Activated T-helper 2 cell treated with anti-CD3 and anti-CD28 coated beads, Interferon-gamma antibody, Interleukin-2, Interleukin-4, amounts not matched to agents 10 μg/mL and 5 μg/mL and 100 μg/mL, durations not matched to agents 14 hours and 24 hours and 36 hours (primary cell): ENCODE measurements at regions of chr15 and their contacts with region 1.

Region 1: GRCh38 chr15:41930221-41930866 is 36.5 kb upstream of the SPTBN5 start:
- DNase-seq: no peak
- H3K4me3 Mint-ChIP-seq: no peak overlapping the region
- H3K27ac Mint-ChIP-seq: no peak overlapping the region
- H3K4me1 Mint-ChIP-seq: peaks cover 36% of the 10 kb centered on the region
- H3K27me3 Mint-ChIP-seq: no peaks in the 10 kb centered on the region

Region 2: DNA sequence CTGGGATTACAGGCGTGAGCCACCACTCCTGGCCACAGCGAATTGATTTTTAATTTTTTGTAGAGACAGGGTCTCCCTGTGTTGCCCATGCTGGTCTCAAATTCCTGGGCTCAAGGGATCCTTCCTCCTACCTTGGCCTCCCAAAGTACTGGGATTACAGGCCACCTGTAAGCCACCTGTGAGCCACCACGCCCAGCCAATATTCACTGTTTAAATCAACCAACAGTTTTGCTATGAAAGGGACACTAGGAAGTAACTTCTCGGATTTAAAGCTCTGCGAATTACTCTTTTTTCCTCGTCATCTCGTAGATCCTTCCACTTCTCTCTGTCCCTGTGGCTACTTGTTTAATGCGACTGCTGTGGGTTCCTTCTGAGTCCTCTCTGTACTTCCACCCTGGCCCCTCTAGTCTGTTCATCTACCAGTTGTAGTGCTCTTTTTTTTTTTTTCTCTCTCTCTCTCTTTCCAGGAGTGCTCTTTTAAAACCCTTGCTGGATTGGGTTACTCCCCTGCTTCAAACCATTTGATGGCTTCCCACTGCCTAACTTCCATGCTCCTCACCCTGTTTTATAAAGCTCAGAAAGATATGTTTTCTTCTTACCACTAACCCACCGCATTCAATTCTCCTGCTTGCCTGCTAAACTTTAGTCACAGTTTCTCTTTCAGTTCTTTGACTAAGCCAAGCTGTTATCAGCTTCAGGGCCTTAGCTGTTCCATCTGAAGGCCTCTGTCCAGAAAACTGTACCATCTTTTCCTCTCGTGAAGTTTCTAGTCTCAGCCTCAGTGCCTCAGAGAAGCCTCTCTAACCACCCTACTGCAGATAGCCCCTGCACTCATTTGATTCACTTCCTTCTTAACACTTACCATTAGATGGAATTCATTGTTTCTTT is 501.1 kb before region 1 on chr15:
- intact Hi-C with region 1: loop called (anchors 10 kb)
- DNase-seq: peak; percentile 14
- H3K4me3 Mint-ChIP-seq: peak overlapping the region; percentile 55
- H3K27ac Mint-ChIP-seq: peak overlapping the region; percentile 94
- H3K4me1 Mint-ChIP-seq: peaks cover 23% of the 10 kb centered on the region
- H3K27me3 Mint-ChIP-seq: no peaks in the 10 kb centered on the region

Region 3: DNA sequence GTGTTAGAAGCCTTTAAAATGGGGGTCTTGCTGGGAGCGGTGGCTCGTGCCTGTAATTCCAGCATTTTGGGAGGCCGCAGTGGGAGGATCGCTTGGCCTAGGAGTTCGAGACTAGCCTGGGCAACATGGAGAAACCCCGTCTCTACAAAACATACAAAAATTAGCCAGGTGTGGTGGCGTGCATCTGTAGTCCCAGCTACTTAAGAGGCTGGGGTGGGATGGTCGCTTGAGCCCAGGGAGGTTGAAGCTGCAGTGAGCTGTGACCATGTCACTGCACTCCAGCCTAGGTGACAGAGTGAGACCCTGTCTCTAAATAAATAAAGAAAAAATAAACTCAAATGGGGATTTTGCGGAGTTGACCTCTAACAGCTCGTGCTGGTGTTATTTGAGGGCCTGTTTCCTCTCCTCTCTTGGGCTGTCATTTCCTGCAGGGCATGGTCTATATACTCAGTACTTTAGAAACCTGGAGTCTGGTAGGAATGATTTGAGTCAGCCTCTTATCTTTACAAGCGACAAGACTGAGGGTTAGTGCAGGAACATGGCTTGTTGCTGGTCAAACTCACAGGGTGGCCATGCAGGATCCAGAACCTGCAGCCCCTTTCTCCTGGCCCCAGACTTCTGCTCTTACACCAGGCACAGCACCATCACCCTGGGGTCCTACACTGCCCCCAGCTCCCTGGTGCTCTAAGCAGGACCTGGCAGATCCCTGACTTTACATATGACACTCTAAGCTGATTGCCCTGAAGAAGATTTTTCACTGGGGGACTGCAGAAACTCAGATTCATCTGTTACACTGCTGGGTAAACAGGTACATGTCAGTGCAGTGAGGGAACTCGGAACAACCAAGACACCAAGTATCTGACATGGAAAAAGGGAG is 26.9 kb after region 1 on chr15:
- intact Hi-C with region 1: no loop called
- DNase-seq: no peak
- H3K4me3 Mint-ChIP-seq: peak overlapping the region; percentile 40
- H3K27ac Mint-ChIP-seq: peak overlapping the region; percentile 1
- H3K4me1 Mint-ChIP-seq: peaks cover 32% of the 10 kb centered on the region
- H3K27me3 Mint-ChIP-seq: no peaks in the 10 kb centered on the region